Activated B cell treated with CpG ODN at 0.5 μM for 24 hours (primary cell): ENCODE measurements at regions of chr5 and their contacts with region 1.

Region 1: GRCh38 chr5:177390363-177391300 is 6.4 kb downstream of the SLC34A1 start:
- DNase-seq: peak; percentile 71
- ATAC-seq: peak; percentile 93
- H3K4me3 Mint-ChIP-seq: no peak overlapping the region
- H3K27ac Mint-ChIP-seq: no peak overlapping the region
- H3K4me1 Mint-ChIP-seq: peaks cover 29% of the 10 kb centered on the region
- H3K27me3 Mint-ChIP-seq: peaks cover 1% of the 10 kb centered on the region
- CTCF ChIP-seq: peak; percentile 29

Region 2: DNA sequence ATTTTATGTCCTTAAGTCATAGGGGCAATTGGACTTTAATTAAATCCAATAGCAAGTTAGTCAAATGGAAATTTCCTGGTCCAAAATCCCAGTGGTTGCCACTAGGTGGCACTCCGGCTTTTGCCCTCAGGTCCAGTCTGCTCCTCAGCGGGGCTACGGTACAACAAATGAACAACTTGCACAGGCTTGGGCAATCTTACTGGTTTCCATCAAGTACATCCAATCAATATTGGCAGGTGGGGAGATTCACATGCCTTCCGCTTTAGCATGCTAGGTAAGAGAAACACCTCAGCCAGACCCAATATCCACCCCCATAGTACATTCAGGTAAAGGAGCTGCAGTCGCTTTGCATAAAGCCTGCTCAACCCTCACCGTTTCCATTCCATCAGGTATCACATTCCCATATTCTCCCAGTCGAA is 72.7 kb before region 1 on chr5:
- CTCF ChIA-PET with region 1: interaction called, 13 read pairs
- POLR2A ChIA-PET with region 1: interaction called, 5 read pairs
- intact Hi-C with region 1: no loop called
- DNase-seq: peak; percentile 48
- ATAC-seq: peak; percentile 87
- H3K4me3 Mint-ChIP-seq: no peak overlapping the region
- H3K27ac Mint-ChIP-seq: no peak overlapping the region
- H3K4me1 Mint-ChIP-seq: peaks cover 15% of the 10 kb centered on the region
- H3K27me3 Mint-ChIP-seq: no peaks in the 10 kb centered on the region
- CTCF ChIP-seq: no peak

Region 3: DNA sequence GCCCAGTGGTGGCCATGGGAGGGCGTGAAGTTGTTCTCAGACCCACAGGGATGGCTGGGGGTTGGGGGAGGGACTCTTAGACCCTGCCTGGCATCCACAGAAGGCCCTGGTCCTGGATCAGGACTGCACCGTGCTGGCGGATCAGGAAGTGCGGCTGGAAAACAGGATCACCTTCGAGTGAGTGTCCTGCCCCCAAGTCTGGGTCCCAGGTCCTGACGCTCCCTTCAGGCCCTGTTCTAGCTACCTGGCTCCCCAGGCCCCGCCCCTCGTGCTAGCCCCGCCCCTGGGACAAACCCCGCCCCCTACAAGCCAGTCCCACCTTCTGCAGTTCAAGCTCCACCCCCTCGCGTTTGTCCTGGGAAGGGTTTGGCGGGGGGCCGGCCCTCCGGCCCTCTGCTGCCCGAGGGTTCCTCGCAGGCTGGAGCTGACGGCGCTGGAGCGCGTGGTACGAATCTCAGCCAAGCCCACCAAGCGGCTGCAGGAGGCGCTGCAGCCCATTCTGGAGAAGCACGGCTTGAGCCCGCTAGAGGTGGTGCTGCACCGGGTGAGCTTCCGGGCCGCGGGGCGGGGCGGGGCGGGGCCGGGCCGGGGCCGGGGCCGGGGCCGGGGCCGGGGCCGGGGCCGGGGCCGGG is 20.0 kb before region 1 on chr5:
- CTCF ChIA-PET with region 1: interaction called, 11 read pairs
- POLR2A ChIA-PET with region 1: no interaction called
- intact Hi-C with region 1: no loop called
- DNase-seq: peak; percentile 48
- ATAC-seq: peak; percentile 85
- H3K4me3 Mint-ChIP-seq: peak overlapping the region; percentile 60
- H3K27ac Mint-ChIP-seq: no peak overlapping the region
- H3K4me1 Mint-ChIP-seq: peaks cover 53% of the 10 kb centered on the region
- H3K27me3 Mint-ChIP-seq: no peaks in the 10 kb centered on the region
- CTCF ChIP-seq: no peak

Region 4: DNA sequence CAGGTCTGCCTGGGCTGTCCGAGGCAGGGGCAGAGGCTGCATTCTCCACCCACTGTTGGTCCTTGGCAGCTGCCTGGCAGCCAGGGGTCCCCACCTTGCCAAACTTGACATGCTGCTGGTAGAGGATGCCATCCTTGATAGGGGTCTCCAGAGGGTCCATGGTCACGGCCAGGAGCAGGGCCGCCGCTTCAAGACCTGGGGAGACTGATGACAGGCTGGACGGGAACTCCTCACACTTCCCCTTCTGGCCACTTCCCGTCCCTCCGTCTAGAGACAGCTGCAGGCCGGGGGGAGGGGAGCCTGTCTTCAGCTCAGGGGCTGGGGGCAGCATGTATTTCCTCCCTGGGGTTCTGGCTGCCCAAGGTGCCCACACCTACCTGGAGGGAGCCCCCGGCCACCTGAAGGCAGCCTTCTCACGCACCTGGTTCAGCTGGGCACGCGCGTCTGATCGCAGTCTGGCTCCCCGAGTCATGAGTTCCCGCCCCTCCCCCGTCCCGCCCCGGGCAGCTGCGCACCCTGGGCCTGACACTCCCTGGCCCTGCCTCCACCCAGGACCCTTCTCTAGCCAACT is 118.8 kb after region 1 on chr5 and contains the start of gene DOK3:
- CTCF ChIA-PET with region 1: interaction called, 11 read pairs
- POLR2A ChIA-PET with region 1: no interaction called
- intact Hi-C with region 1: no loop called
- DNase-seq: peak; percentile 52
- ATAC-seq: peak; percentile 33
- H3K4me3 Mint-ChIP-seq: peak within 1 kb of the TSS; percentile 93
- H3K27ac Mint-ChIP-seq: peak within 1 kb of the TSS; percentile 96
- H3K4me1 Mint-ChIP-seq: peaks cover 60% of the 10 kb centered on the region
- H3K27me3 Mint-ChIP-seq: no peaks in the 10 kb centered on the region
- CTCF ChIP-seq: no peak
- total RNA-seq, gene DOK3: 82.5 and 88.5 TPM in 2 replicates

Region 5: DNA sequence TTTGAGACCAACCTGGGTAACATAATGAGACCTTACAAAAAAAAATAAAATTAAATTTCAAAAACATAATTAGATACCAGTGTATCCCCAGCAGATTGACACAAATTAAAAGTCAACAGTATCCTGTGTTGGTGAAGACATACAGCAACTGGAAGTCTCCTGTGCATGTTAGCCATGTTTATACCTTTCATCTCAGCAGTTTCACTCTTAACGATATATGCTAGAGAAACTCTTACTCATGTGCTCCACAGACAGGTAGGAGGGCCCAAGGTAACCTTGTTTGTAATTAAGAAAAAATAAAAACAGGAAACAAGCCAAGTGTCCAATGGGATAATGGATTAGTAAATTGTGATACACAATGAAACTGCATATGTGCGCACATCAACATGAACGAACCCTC is 672.6 kb after region 1 on chr5:
- CTCF ChIA-PET with region 1: no interaction called
- POLR2A ChIA-PET with region 1: no interaction called
- intact Hi-C with region 1: loop called (anchors 2 kb)
- DNase-seq: no peak
- ATAC-seq: no peak
- H3K4me3 Mint-ChIP-seq: no peak overlapping the region
- H3K27ac Mint-ChIP-seq: no peak overlapping the region
- H3K4me1 Mint-ChIP-seq: peaks cover 13% of the 10 kb centered on the region
- H3K27me3 Mint-ChIP-seq: peaks cover 6% of the 10 kb centered on the region
- CTCF ChIP-seq: no peak